Sigmoid colon (tissue), 7 donors: ENCODE measurements at regions of chr21 and their contacts with region 1.

Region 1: GRCh38 chr21:46048926-46049889 is 48.7 kb upstream of the COL6A2 start:
- DNase-seq: peak; percentile 98
- H3K4me3 ChIP-seq: no peak overlapping the region
- H3K27ac ChIP-seq: peak overlapping the region; percentile 84 to 88 (median 86)
- H3K4me1 ChIP-seq: peaks cover 0 to 29% (median 23%) of the 10 kb centered on the region in 4 donors
- H3K27me3 ChIP-seq: no peaks in the 10 kb centered on the region
- CTCF ChIP-seq: no peak
- EP300 ChIP-seq: peak in 2 of 4 donors; percentile 28 to 57
- POLR2A ChIP-seq: no peak

Region 2: DNA sequence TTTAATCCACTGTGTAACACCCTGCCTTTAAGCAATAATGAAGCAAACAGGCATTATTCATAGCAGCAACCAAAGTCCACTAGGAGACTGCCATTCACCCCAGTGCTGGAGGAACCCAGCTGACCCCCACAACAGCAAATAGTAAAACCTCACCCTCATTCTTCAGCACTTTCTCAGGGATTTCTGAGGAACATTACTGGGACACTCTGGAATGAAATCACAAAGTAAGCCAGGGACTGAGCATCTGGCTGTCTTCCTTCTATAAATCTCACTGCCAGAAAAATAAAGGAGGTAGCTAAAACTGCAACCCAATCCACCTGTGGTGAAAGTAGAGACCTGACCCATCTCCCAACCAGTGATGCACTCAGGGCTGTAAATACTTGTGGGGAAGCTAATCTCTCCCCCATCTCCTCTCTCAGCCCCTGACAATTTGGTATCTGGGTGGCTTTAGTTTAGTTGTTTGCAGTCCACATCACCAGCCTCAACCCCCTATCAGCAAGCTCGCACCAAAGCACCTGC is 20.6 kb before region 1 on chr21:
- intact Hi-C with region 1: loop called (anchors 2 kb)
- DNase-seq: peak; percentile 70
- H3K4me3 ChIP-seq: no peak overlapping the region
- H3K27ac ChIP-seq: peak overlapping the region; percentile 86 to 96 (median 90)
- H3K4me1 ChIP-seq: peaks cover 0 to 63% (median 55%) of the 10 kb centered on the region in 4 donors
- H3K27me3 ChIP-seq: no peaks in the 10 kb centered on the region
- CTCF ChIP-seq: no peak
- EP300 ChIP-seq: no peak
- POLR2A ChIP-seq: no peak

Region 3: GRCh38 chr21:46089285-46089684 is 40.1 kb after region 1 on chr21:
- intact Hi-C with region 1: no loop called
- DNase-seq: peak; percentile 51
- H3K4me3 ChIP-seq: no peak overlapping the region
- H3K27ac ChIP-seq: peak overlapping the region in 3 of 4 donors; percentile 54 to 62 (median 59)
- H3K4me1 ChIP-seq: peaks cover 0 to 37% (median 32%) of the 10 kb centered on the region in 4 donors
- H3K27me3 ChIP-seq: no peaks in the 10 kb centered on the region
- CTCF ChIP-seq: no peak
- EP300 ChIP-seq: no peak
- POLR2A ChIP-seq: no peak

Region 4: DNA sequence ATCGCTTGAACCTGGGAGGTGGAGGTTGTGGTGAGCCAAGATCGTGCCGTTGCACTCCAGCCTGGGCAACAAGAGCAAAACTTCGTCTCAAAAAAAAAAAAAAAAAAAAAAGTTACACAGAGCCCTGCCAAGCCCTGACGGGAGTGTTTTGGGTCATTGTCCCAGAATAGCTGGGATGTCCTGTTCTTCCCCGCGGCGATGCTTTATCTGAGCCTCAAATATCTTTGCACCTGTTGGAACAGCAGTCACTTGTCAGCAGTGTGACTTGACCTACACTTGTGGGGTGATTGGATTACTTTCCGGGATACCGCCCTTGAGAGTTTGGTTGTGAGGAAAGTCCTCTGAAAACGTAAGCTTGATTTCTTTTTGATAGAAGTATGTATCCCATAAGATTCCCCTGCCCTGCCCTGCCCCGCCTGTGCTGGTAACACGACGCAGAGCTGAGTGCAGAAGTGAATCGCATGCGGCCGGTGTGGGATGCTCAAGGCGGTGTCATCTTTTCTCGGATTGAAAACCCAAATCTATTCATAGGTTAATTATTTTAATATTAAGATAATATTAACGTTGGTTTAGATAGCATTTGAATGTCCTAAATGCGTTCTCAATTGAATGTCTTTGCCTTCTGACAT is 325.7 kb after region 1 on chr21:
- intact Hi-C with region 1: no loop called
- DNase-seq: no peak
- H3K4me3 ChIP-seq: no peak overlapping the region
- H3K27ac ChIP-seq: no peak overlapping the region
- H3K4me1 ChIP-seq: no peaks in the 10 kb centered on the region
- H3K27me3 ChIP-seq: no peaks in the 10 kb centered on the region
- CTCF ChIP-seq: no peak
- EP300 ChIP-seq: no peak
- POLR2A ChIP-seq: no peak